ENCODE measurements at regions of chr16 and their contacts with region 1.

Region 1: DNA sequence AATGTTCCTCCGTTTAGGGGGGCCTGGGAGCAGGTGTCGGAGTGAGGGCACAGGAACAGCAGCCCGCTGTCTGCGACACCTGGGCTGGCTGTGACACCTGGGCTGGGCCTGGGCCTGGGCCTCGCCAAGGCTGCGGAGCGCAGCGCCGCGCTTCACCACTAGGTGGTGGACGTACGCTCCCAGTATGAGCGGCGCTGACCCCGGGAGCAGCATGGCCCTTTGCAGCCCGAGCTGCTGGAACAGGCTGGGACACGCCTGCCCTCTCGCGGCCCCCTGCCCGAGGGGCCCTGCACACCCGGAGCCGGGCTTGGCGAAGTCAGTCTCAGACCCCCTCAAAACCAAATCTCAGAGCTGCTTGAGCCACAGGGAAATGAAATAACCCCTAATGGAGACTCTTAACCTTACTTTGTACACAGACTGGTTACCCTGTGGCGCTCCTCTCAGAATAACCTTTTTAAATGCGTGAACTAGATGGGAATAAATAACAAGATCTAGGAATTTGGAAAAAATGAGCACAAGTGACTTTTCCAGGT is 38.6 kb upstream of the FA2H start:
- DNase-seq: peak; percentile 59 to 95 (median 79)
- ATAC-seq: peak; percentile 100
- H3K4me3 ChIP-seq: no peak overlapping the region
- H3K27ac ChIP-seq: no peak overlapping the region
- H3K4me1 ChIP-seq: no peaks in the 10 kb centered on the region
- H3K27me3 ChIP-seq: no peaks in the 10 kb centered on the region
- CTCF ChIP-seq: peak; percentile 94 to 95

Region 2: DNA sequence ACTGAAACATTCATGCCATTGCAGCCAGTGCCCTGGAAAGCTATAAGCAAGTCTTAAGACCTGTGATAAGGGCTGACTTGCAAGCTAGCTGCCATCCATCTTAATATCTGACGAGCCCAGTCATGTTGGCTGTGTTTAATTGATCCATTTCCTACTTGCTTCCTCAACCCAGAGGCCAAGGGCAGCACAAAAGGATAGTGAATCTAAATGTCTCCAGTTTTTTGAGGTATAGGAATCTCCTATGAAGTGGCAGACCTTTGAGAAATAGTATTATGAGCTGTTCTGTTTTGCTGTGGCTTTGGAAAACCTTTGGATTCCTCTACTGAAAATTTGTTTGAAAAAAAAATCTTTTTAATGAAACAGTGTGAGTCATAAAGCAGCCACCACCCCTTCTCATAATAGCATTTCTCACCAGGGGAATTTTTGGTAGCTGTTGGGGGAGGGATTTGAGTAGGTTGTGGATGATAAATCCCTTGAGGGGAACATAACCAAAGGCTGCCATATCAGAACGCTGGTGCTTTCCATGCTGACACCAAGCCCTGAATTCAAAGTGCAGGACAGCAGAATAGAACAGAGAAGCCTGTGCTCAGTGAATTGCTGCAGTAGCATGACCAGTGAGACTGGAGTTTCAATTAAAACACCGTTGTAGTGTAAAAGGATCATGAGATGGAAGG is 198.6 kb after region 1 on chr16:
- intact Hi-C with region 1: no loop called
- DNase-seq: no peak
- ATAC-seq: peak; percentile 88
- H3K4me3 ChIP-seq: no peak overlapping the region
- H3K27ac ChIP-seq: peak overlapping the region; percentile 80 to 86
- H3K4me1 ChIP-seq: peaks cover 15 to 58% of the 10 kb centered on the region in 2 donors
- H3K27me3 ChIP-seq: no peaks in the 10 kb centered on the region
- CTCF ChIP-seq: no peak

Region 3: GRCh38 chr16:75130150-75130771 is 317.1 kb after region 1 on chr16:
- intact Hi-C with region 1: loop called in 1 of 2 experiments (anchors 5 kb)
- DNase-seq: no peak
- ATAC-seq: peak; percentile 69
- H3K4me3 ChIP-seq: no peak overlapping the region
- H3K27ac ChIP-seq: no peak overlapping the region
- H3K4me1 ChIP-seq: peaks cover 0 to 3% of the 10 kb centered on the region in 2 donors
- H3K27me3 ChIP-seq: no peaks in the 10 kb centered on the region
- CTCF ChIP-seq: no peak

Region 4: DNA sequence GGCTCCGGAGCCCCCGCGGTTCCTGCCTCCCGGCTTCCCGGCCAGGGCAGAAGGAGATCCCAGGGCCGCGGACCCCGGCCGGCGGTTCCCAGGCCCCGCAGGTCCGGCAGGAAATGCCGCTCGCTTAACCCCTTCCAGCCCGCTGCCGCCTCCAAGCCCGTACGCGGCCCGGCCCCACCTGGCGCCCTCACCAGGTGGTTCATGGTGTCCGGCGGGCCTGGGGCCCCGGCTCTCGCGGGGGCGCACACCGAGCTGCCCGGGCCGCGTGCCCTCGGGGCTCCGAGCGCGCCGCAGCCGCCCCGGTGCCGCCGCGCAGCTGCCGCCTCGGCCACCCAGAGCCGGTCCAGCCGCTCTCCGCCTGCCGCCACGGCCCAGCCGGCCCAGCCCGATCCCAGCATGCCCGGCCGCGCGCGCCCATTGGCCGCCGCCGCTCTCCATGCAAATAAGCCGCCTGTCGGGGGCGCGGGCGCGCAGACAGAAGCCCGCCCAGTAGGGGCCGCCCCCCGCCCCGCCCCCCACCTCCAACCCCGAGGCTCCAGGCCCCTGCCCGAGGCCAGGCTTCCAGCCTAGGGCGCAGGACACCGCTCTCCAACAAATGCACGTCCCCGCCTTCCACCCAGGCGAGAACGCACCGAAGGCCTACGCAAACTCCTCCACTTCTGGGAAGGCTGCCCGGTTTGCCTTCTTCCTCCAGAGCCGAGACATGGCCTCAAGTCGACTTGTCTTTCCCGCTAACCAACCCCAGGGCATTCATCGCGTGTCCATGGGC is 438.3 kb after region 1 on chr16 and contains the start of gene BCAR1:
- intact Hi-C with region 1: no loop called
- DNase-seq: peak in 3 of 4 donors; percentile 87 to 92 (median 92)
- ATAC-seq: peak; percentile 80
- H3K4me3 ChIP-seq: peak within 1 kb of the TSS; percentile 58 to 92
- H3K27ac ChIP-seq: peak within 1 kb of the TSS; percentile 82 to 87
- H3K4me1 ChIP-seq: peaks cover 59 to 94% of the 10 kb centered on the region in 2 donors
- H3K27me3 ChIP-seq: peaks cover 0 to 93% of the 10 kb centered on the region in 2 donors
- CTCF ChIP-seq: no peak
- polyA plus RNA-seq, gene BCAR1: 39.6 to 60.8 (median 50.4) TPM

Measured in left lung (tissue), 14 donors.